PC-3 (cell line): ENCODE measurements at regions of chr2 and their contacts with region 1.

Region 1: GRCh38 chr2:33015421-33016142 is 68.8 kb downstream of the LTBP1 start:
- DNase-seq: peak; percentile 94
- ATAC-seq: peak; percentile 72
- H3K4me3 ChIP-seq: no peak overlapping the region
- H3K27ac ChIP-seq: peak overlapping the region; percentile 77
- H3K4me1 ChIP-seq: peaks cover 52% of the 10 kb centered on the region
- H3K27me3 ChIP-seq: no peaks in the 10 kb centered on the region
- CTCF ChIP-seq: no peak

Region 2: GRCh38 chr2:32977228-32977758 is 38.3 kb before region 1 on chr2:
- CTCF ChIA-PET with region 1: no interaction called
- POLR2A ChIA-PET with region 1: no interaction called
- intact Hi-C with region 1: loop called (anchors 5 kb)
- DNase-seq: peak; percentile 95
- ATAC-seq: peak; percentile 100
- H3K4me3 ChIP-seq: no peak overlapping the region
- H3K27ac ChIP-seq: peak overlapping the region; percentile 7; the same call in 1 of the 2 replicates
- H3K4me1 ChIP-seq: peaks cover 15% of the 10 kb centered on the region
- H3K27me3 ChIP-seq: no peaks in the 10 kb centered on the region
- CTCF ChIP-seq: no peak